ENCODE measurements at regions of chr19 and their contacts with region 1.

Region 1: DNA sequence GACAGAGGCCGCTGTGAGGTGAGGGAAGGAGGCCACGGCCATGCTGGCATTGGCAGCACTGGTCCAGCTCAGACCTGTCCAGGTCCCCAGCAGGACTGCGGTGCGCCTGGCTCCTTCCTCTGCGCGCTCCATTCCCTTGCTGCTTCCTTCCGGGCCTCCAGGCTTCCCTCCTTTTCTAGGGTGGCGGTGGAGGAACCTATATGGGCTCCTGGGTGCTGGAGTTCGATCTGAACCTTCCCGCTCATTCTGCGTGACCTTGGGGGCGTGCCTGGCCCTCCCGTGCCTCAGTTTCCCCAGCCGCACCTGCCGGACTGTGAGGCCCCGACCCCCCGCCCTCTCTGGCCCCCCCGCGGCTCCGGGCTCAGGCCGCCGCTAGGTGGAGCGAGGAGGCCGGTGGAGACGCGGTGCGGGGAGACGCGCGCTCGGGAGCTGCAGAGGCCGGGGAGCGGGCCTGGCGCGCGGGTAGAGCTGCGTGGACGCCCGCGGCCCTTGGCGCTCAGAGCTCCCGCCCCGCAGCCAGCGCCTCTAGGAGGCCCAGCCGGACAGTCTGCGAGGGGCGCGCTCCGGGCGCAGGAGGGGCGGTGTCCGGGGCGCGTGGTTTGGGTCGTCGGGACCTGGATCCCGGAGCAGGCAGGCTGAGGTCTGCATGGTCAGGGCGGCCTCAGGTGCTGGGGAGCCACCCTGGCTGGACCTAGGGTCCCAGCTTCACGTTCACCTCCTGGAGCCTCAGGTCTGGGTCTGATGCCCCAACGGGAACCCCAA is 30.0 kb downstream of the EFNA2 start:
- DNase-seq: peak; percentile 52 to 58
- ATAC-seq: peak; percentile 69 to 80
- H3K4me3 ChIP-seq: no peak overlapping the region
- H3K27ac ChIP-seq: peak overlapping the region; percentile 14 to 90; a peak in 4 of 6 replicates
- H3K4me1 ChIP-seq: peaks cover 25% of the 10 kb centered on the region
- CTCF ChIP-seq: peak; percentile 66
- EP300 ChIP-seq: no peak
- POLR2A ChIP-seq: no peak
- RAD21 ChIP-seq: peak; percentile 63 to 78

Region 2: GRCh38 chr19:925526-926322 is 389.9 kb before region 1 on chr19 and contains the start of gene ARID3A:
- CTCF ChIA-PET with region 1: no interaction called
- POLR2A ChIA-PET with region 1: no interaction called
- DNase-seq: peak; percentile 71 to 77
- ATAC-seq: peak; percentile 62 to 73
- H3K4me3 ChIP-seq: peak within 1 kb of the TSS; percentile 91
- H3K27ac ChIP-seq: peak within 1 kb of the TSS; percentile 99 to 100
- H3K4me1 ChIP-seq: peaks cover 21% of the 10 kb centered on the region; the same call in 2 of the 3 replicates
- CTCF ChIP-seq: no peak
- EP300 ChIP-seq: no peak
- POLR2A ChIP-seq: no peak
- RAD21 ChIP-seq: no peak
- polyA plus RNA-seq, gene ARID3A: 3.3 and 3.4 TPM in 2 replicates

Region 3: DNA sequence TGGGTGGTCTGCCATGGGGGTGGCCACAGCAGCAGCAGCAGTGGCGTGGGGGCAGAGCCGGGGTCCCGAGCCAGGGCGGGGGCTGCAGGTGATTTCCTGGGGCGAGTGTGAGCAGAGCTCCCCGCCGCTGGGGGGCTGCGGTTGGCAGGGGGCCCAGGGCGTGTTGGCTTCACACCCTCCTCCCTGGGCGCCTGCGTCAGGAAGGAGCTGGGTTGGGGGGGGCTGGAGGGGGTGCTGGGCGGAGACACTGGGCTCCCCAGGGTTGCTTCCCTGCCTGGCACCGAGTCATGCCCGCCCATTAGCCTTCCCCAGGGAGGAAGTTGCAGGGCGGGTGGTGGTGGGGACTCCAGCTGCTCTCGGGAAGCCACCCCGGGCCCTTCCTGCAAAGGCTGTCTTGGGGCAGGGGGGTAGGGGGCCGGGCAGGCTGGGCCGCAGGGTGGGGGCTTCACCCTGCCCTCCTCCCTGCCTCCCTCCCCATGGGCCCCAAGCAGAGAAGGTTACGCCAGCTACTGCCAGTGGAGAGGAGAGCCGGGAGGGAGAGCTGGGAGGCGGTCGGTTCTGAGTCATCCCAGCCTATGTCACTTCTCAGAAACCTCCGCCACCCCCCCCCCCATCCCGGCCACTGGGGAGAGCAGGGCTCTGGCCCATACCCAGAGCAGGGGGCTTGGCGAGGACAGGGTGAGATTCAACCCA is 62.7 kb before region 1 on chr19:
- CTCF ChIA-PET with region 1: no interaction called
- POLR2A ChIA-PET with region 1: no interaction called
- DNase-seq: peak in 1 of 2 experiments; percentile 91
- ATAC-seq: peak; percentile 36 to 61
- H3K4me3 ChIP-seq: peak overlapping the region; percentile 97
- H3K27ac ChIP-seq: peak overlapping the region; percentile 100
- H3K4me1 ChIP-seq: peaks cover 45% of the 10 kb centered on the region
- CTCF ChIP-seq: no peak
- EP300 ChIP-seq: peak; percentile 35 to 39; a peak in 2 of 5 replicates
- POLR2A ChIP-seq: no peak
- RAD21 ChIP-seq: no peak; a peak in 1 of 5 replicates

Region 4: GRCh38 chr19:1304197-1304924 is 11.3 kb before region 1 on chr19:
- CTCF ChIA-PET with region 1: interaction called, 11 read pairs
- POLR2A ChIA-PET with region 1: no interaction called
- DNase-seq: no peak
- ATAC-seq: peak in 1 of 2 experiments; percentile 38; a peak in 4 of 6 replicates
- H3K4me3 ChIP-seq: no peak overlapping the region
- H3K27ac ChIP-seq: no peak overlapping the region
- H3K4me1 ChIP-seq: no peaks in the 10 kb centered on the region
- CTCF ChIP-seq: no peak
- EP300 ChIP-seq: no peak
- POLR2A ChIP-seq: no peak
- RAD21 ChIP-seq: no peak

Region 5: DNA sequence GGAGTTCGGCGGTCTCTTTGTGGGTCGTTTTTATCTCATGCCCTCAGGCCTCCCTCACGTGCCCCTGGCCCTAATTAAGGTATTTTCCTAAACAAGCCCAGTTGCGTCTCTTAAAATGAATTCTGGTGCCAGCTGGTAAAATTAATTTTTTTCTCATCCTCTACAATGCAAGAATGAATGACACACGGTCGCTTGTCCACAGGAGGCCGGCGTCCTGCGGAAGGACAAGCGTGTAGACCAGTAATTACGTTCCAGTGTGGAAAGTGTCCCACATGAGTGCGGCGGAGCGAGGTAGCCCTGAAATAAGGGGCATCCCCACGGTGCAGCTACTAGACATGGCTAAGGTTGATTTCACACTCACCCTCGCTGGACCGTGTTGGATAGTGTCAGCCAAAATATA is 33.6 kb after region 1 on chr19:
- CTCF ChIA-PET with region 1: interaction called, 28 read pairs
- POLR2A ChIA-PET with region 1: interaction called, 3 read pairs
- DNase-seq: no peak
- ATAC-seq: no peak
- H3K4me3 ChIP-seq: no peak overlapping the region
- H3K27ac ChIP-seq: no peak overlapping the region
- H3K4me1 ChIP-seq: peaks cover 3% of the 10 kb centered on the region; the same call in 2 of the 3 replicates
- CTCF ChIP-seq: no peak
- EP300 ChIP-seq: no peak
- POLR2A ChIP-seq: no peak
- RAD21 ChIP-seq: no peak

Region 6: GRCh38 chr19:1355568-1356507 is 40.2 kb after region 1 on chr19:
- CTCF ChIA-PET with region 1: interaction called, 27 read pairs
- POLR2A ChIA-PET with region 1: interaction called, 3 read pairs
- DNase-seq: no peak
- ATAC-seq: no peak
- H3K4me3 ChIP-seq: peak overlapping the region; percentile 92
- H3K27ac ChIP-seq: peak overlapping the region; percentile 94 to 100; a peak in 5 of 6 replicates
- H3K4me1 ChIP-seq: peaks cover 13% of the 10 kb centered on the region
- CTCF ChIP-seq: no peak
- EP300 ChIP-seq: no peak
- POLR2A ChIP-seq: no peak
- RAD21 ChIP-seq: no peak

Region 7: DNA sequence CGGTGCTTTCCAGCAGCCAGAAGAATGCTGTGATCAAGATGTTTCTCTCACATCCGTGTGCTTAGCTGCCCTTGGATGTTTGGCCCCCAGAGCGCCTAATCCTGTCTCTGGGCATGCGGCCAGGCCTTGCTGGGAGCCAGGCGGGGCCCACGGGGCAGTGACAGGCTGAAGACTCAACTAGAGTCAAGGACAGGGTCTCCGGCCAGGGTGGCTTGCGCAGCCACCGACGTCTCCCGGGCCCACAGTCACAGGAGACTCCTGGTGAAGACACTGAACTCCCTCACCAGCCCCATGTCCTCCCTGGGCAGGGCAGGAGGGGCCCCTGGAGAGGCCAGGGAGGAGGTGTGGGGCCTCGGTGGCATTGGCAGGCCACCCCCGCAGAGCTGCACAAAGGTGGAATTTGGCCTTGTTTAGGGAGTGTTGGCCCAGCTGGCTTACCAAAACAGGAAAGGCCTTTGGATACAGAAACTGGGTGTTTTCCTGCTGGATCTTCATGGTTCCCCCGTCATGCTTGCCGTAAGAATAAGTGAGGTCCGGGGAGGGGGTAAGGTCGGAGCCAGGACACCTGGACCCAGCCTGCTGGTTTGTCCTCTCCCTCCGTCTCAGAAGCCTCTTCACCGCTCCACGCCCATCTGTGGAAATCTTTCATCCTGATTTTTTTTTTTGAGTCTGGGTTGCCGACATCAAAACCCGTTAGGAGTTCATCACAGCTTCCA is 58.0 kb after region 1 on chr19:
- CTCF ChIA-PET with region 1: interaction called, 29 read pairs
- POLR2A ChIA-PET with region 1: no interaction called
- DNase-seq: no peak
- ATAC-seq: no peak
- H3K4me3 ChIP-seq: no peak overlapping the region
- H3K27ac ChIP-seq: no peak overlapping the region
- H3K4me1 ChIP-seq: no peaks in the 10 kb centered on the region
- CTCF ChIP-seq: no peak
- EP300 ChIP-seq: no peak
- POLR2A ChIP-seq: no peak
- RAD21 ChIP-seq: no peak

Region 8: DNA sequence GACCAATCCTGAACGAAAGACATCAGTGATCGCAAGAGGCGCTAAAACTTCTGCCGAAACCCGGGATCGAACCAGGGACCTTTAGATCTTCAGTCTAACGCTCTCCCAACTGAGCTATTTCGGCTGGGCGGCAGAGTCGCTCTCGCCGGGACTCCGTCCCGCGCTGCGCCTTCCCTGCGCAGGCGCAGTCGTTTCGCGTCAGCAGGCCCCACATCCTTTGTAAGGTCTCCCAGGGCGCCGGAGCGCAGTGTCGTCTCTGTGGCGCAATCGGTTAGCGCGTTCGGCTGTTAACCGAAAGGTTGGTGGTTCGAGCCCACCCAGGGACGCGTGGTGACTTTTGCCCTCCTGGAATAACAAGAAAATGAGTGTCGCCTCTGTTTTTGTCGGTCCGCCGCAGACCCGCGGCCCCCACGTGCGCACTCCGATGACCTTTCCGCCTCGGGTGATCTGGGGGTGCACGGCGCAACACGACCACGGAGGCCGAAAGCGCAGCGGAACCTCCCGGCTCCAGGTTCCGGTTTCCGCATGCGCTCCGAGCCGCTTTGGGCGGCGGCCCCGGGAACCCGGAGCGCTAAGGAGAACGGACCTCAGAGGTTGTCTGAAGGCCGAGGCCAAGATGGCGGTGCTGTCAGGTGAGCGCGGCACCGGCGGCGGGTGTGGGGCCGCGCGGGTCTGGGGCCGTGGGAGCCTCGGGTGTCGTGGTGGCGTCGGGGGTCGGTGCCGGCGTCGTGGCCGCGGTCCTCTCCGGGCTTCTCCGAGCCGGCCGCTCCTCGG is 67.8 kb after region 1 on chr19 and contains the start of gene NDUFS7:
- CTCF ChIA-PET with region 1: interaction called, 11 read pairs
- POLR2A ChIA-PET with region 1: no interaction called
- DNase-seq: peak; percentile 47 to 93
- ATAC-seq: peak; percentile 86 to 87
- H3K4me3 ChIP-seq: peak within 1 kb of the TSS; percentile 82
- H3K27ac ChIP-seq: peak within 1 kb of the TSS; percentile 78 to 96
- H3K4me1 ChIP-seq: peaks cover 4% of the 10 kb centered on the region; the same call in 1 of the 3 replicates
- CTCF ChIP-seq: 0 out of 3 replicates have a peak, but pooled peaks have one; percentile 12
- EP300 ChIP-seq: no peak
- POLR2A ChIP-seq: peak; percentile 23; the same call in 1 of the 2 replicates
- RAD21 ChIP-seq: peak in 1 of 2 experiments; percentile 17; a peak in 1 of 5 replicates
- polyA plus RNA-seq, gene NDUFS7: 18.6 and 19.3 TPM in 2 replicates

Region 9: DNA sequence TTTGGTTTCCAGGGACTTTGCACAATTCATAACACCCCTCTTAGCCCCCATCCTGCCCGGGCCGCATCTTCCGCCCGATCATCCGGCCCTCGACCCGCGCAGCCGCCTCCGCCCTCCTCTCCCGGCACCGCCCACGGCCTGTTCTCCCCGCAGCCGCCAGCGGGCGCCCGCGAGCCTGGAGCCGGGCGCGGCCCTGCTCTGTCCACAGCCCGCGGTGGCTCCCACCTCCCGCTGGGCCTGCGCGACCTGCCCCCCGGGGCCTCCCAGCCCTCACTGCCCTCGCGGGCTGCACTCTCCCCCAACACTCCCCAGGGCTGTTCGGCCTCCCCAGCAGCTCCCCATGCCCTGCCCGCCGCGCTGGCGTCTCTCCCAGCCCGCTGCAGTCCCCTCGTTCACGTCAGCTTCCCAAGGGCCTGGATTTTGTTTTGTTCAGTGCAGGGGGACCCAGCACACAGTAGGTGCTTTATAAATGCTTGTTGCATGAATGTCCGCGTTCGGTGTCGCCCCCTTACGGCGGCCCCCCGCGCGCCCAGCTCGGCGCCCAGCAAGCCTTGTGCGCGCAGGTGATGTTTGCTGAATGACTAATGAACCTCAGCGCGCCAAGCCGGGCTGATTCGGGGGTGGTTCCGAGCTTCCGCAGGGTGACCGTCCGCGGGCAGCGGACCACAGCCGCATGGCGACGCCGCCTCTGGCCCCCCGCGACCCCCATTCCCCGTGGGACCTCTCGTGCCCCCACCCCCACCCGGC is 129.7 kb after region 1 on chr19:
- CTCF ChIA-PET with region 1: no interaction called
- POLR2A ChIA-PET with region 1: no interaction called
- DNase-seq: peak; percentile 70 to 84
- ATAC-seq: peak; percentile 58 to 84
- H3K4me3 ChIP-seq: peak overlapping the region; percentile 63
- H3K27ac ChIP-seq: peak overlapping the region; percentile 79 to 96
- H3K4me1 ChIP-seq: peaks cover 48% of the 10 kb centered on the region
- CTCF ChIP-seq: peak; percentile 69
- EP300 ChIP-seq: no peak
- POLR2A ChIP-seq: peak; percentile 7; the same call in 1 of the 2 replicates
- RAD21 ChIP-seq: peak; percentile 26 to 37